GM12878 (cell line): ENCODE measurements at regions of chr9 and their contacts with region 1.

Region 1: GRCh38 chr9:116572095-116572748 is 114.9 kb upstream of the TRIM32 start:
- DNase-seq: no peak
- ATAC-seq: peak; percentile 99
- H3K4me3 ChIP-seq: no peak overlapping the region
- H3K27ac ChIP-seq: no peak overlapping the region
- H3K4me1 ChIP-seq: no peaks in the 10 kb centered on the region
- H3K27me3 ChIP-seq: no peaks in the 10 kb centered on the region
- CTCF ChIP-seq: peak; percentile 85 to 92 (median 90)
- EP300 ChIP-seq: no peak
- POLR2A ChIP-seq: no peak
- RAD21 ChIP-seq: peak; percentile 92

Region 2: DNA sequence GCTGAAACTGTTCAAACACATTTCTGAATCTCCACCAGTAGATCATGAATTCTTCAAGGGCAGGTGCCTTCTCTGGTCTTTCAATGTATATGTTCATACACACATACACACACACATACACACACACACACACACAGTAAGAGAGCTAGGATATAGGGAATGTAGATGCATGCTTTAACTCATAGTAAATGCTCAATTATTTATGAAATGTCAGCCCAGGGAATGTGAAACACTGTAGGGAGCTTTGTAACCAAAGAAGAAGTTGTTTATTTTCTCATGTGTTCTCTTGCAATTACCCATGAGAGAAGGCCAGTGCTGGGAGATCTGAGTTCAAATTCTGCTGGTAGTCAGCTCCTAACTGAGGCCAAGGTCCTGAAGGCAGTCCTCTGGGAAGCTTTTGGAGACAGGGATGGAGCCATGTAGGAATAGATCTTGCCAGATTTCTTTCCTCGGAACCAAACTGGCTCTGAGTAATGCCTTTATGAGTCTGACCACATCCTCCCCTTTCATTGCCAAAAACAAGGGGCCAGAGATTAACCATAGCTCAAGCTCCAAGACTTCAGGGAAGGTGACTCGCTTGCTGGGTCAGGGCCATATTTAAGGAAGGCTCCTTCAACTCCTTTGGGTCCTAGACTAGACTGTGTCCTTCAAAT is 967.3 kb before region 1 on chr9:
- CTCF ChIA-PET with region 1: no interaction called
- POLR2A ChIA-PET with region 1: no interaction called
- RAD21 ChIA-PET with region 1: no interaction called
- SMC1A ChIA-PET with region 1: no interaction called
- in situ Hi-C with region 1: loop called (anchors 10 kb)
- intact Hi-C with region 1: no loop called
- DNase-seq: no peak
- ATAC-seq: no peak
- H3K4me3 ChIP-seq: no peak overlapping the region
- H3K27ac ChIP-seq: no peak overlapping the region
- H3K4me1 ChIP-seq: no peaks in the 10 kb centered on the region
- H3K27me3 ChIP-seq: no peaks in the 10 kb centered on the region
- CTCF ChIP-seq: no peak
- EP300 ChIP-seq: no peak
- POLR2A ChIP-seq: no peak
- RAD21 ChIP-seq: no peak

Region 3: GRCh38 chr9:115883457-115884329 is 688.5 kb before region 1 on chr9:
- CTCF ChIA-PET with region 1: no interaction called
- POLR2A ChIA-PET with region 1: no interaction called
- RAD21 ChIA-PET with region 1: no interaction called
- SMC1A ChIA-PET with region 1: no interaction called
- in situ Hi-C with region 1: no loop called
- intact Hi-C with region 1: loop called (anchors 2 kb)
- DNase-seq: no peak
- ATAC-seq: peak; percentile 63
- H3K4me3 ChIP-seq: no peak overlapping the region
- H3K27ac ChIP-seq: no peak overlapping the region
- H3K4me1 ChIP-seq: no peaks in the 10 kb centered on the region
- H3K27me3 ChIP-seq: no peaks in the 10 kb centered on the region
- CTCF ChIP-seq: peak; percentile 26 to 44 (median 32); a peak in 4 of 6 replicates
- EP300 ChIP-seq: no peak
- POLR2A ChIP-seq: no peak
- RAD21 ChIP-seq: peak; percentile 42; the same call in 1 of the 2 replicates

Region 4: GRCh38 chr9:116149844-116150243 is 422.4 kb before region 1 on chr9:
- CTCF ChIA-PET with region 1: interaction called, 13 read pairs
- POLR2A ChIA-PET with region 1: no interaction called
- RAD21 ChIA-PET with region 1: interaction called, 3 read pairs
- SMC1A ChIA-PET with region 1: interaction called, 3 read pairs
- in situ Hi-C with region 1: no loop called
- intact Hi-C with region 1: loop called (anchors 2 kb)
- DNase-seq: no peak
- ATAC-seq: peak; percentile 77
- H3K4me3 ChIP-seq: no peak overlapping the region
- H3K27ac ChIP-seq: no peak overlapping the region
- H3K4me1 ChIP-seq: no peaks in the 10 kb centered on the region
- H3K27me3 ChIP-seq: peaks cover under 1 to 8% of the 10 kb centered on the region in 2 experiments; a peak in 3 of 4 replicates
- CTCF ChIP-seq: peak; percentile 50 to 54 (median 54)
- EP300 ChIP-seq: no peak
- POLR2A ChIP-seq: no peak
- RAD21 ChIP-seq: peak; percentile 53

Region 5: GRCh38 chr9:116163293-116164055 is 408.7 kb before region 1 on chr9:
- CTCF ChIA-PET with region 1: interaction called, 5 read pairs
- POLR2A ChIA-PET with region 1: no interaction called
- RAD21 ChIA-PET with region 1: no interaction called
- SMC1A ChIA-PET with region 1: interaction called, 3 read pairs
- in situ Hi-C with region 1: loop called (anchors 5 kb)
- intact Hi-C with region 1: loop called (anchors 1 kb)
- DNase-seq: no peak
- ATAC-seq: peak; percentile 54
- H3K4me3 ChIP-seq: no peak overlapping the region
- H3K27ac ChIP-seq: no peak overlapping the region
- H3K4me1 ChIP-seq: no peaks in the 10 kb centered on the region
- H3K27me3 ChIP-seq: no peaks in the 10 kb centered on the region
- CTCF ChIP-seq: peak; percentile 36 to 42 (median 41); a peak in 4 of 6 replicates
- EP300 ChIP-seq: no peak
- POLR2A ChIP-seq: no peak
- RAD21 ChIP-seq: peak; percentile 48

Region 6: DNA sequence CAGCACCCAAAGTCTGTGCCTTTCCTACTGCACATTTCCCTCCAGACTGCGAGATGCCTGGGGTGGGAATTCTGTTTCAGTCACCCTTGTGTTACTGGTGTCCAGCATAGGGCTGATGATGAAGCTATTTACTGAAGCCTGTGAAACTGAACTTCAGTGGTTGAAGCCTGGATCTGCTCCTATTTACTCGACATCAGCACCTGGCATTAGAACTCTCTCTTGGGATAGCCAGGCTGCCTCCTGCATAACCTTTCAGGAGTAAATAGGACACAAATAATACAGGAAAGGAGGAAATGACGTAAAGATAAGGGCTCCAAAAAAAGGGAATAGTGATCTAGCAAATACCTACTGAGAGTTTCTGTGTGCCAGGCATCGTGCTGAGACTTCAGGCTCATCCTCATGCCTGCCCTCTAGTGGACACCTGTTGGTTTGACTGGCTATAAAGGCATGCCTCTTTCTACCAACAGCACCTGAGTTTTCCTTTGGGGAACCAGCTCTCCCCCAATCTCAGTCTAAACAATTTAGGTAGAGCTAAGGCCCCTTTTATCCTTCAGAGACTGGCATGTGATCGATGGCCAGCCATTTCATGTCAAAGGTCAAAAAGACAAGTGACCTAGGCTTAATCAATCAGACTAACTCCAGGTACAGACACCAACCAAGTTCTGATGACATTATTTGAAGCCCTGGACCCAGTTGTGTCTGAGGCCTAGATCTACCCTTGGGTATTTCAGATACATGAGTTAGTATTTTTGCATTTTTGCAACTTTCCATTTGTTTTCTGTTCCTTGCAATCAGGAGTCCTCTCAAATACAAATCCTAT is 77.2 kb before region 1 on chr9:
- CTCF ChIA-PET with region 1: interaction called, 13 read pairs
- POLR2A ChIA-PET with region 1: no interaction called
- RAD21 ChIA-PET with region 1: no interaction called
- SMC1A ChIA-PET with region 1: no interaction called
- in situ Hi-C with region 1: no loop called
- intact Hi-C with region 1: loop called (anchors 5 kb)
- DNase-seq: no peak
- ATAC-seq: peak; percentile 82
- H3K4me3 ChIP-seq: no peak overlapping the region
- H3K27ac ChIP-seq: no peak overlapping the region
- H3K4me1 ChIP-seq: no peaks in the 10 kb centered on the region
- H3K27me3 ChIP-seq: no peaks in the 10 kb centered on the region
- CTCF ChIP-seq: peak; percentile 60 to 79 (median 77)
- EP300 ChIP-seq: no peak
- POLR2A ChIP-seq: no peak
- RAD21 ChIP-seq: peak; percentile 55

Region 7: DNA sequence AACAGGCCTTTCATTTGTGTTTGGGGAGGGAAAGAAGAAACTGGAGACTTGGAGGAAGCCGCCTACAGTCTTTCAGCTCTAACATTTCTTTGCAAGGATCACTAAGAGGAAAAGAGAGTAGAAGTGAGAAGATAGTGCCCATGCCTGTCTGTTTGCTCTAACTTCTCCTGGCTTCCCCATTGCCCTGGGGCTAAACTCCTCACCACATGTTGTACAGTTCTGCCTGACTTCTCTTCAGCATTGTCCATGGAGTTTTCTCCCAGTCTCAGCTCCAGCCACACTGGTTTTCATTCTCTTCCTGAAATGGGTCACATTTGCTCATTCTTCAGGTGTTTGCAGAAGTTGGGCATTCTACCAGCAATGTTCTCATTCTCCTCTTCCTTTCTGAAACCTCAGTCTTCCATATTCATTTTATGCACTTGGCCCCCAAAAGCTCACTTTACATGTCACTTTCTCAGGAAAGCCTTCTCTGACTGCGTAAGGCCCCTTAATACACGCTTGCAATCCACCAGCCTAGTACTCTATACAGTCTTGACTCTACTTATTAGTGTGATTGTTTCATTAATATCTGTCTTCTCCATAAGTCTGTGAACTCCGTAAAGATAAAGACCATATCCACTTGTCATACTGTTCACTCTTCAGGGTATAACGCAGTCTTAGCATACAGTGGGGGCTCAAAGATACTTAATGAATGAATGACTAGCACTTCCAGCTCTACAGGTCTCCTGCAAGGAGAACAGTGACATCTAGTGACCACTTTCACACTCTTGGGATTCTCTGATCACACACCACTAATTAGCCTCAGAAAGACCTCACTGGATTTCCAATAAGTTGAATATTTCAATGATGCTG is 74.7 kb after region 1 on chr9:
- CTCF ChIA-PET with region 1: no interaction called
- POLR2A ChIA-PET with region 1: no interaction called
- RAD21 ChIA-PET with region 1: no interaction called
- SMC1A ChIA-PET with region 1: no interaction called
- in situ Hi-C with region 1: no loop called
- intact Hi-C with region 1: loop called (anchors 5 kb)
- DNase-seq: no peak
- ATAC-seq: peak; percentile 75
- H3K4me3 ChIP-seq: no peak overlapping the region
- H3K27ac ChIP-seq: no peak overlapping the region
- H3K4me1 ChIP-seq: no peaks in the 10 kb centered on the region
- H3K27me3 ChIP-seq: no peaks in the 10 kb centered on the region
- CTCF ChIP-seq: peak; percentile 46 to 57 (median 49); a peak in 5 of 6 replicates
- EP300 ChIP-seq: no peak
- POLR2A ChIP-seq: no peak
- RAD21 ChIP-seq: peak; percentile 68